ENCODE measurements at regions of chr19 and their contacts with region 1.

Region 1: GRCh38 chr19:18906605-18907519 is 10.9 kb upstream of the CERS1 start:
- DNase-seq: no peak
- ATAC-seq: no peak
- H3K4me3 ChIP-seq: no peak overlapping the region
- H3K4me3 Mint-ChIP-seq: no peak overlapping the region
- H3K27ac ChIP-seq: no peak overlapping the region
- H3K27ac Mint-ChIP-seq: no peak overlapping the region
- H3K4me1 ChIP-seq: peaks cover 0 to 5% of the 10 kb centered on the region in 2 experiments
- H3K4me1 Mint-ChIP-seq: no peaks in the 10 kb centered on the region
- H3K27me3 ChIP-seq: peaks cover 0 to 6% of the 10 kb centered on the region in 2 experiments
- H3K27me3 Mint-ChIP-seq: no peaks in the 10 kb centered on the region

Region 2: DNA sequence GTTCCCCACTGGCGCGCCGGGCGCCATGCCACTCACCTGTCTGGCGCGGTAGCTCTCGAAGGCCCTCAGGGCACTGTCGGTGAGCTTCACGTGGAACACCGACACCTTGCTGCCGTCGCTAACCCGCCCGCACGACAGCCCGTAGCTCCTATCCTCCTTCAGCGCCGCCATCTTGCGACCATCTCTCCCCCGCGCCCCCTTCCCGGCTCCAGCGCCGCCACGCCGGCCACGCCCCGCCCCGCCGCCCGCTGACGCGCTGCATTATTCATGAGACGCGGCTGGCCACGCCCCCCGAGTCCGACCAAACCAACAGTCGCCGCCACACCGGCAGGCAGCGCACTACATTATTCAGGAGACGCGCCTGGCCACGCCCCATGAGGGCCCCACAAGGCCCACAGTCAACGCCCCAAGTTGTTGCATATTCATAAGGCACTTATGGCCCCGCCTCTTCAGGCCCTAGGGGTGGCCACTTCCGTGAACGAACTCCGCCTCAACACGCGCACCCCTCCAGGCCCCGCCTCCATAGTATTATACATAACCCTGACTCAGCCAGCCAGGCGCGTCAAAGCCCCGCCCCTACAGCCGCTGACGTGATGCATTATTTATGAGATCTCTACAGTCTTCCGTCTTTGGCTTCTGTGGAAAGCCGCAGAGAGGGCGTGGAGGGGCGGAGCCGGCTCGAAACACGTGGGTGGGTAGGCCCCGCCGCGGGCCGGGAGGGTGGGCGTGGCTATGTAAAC is 384.8 kb before region 1 on chr19 and contains the start of gene ELL:
- CTCF ChIA-PET with region 1: no interaction called
- POLR2A ChIA-PET with region 1: no interaction called
- DNase-seq: peak; percentile 100
- ATAC-seq: peak; percentile 86 to 89 (median 88)
- H3K4me3 ChIP-seq: peak within 1 kb of the TSS; percentile 65 to 87
- H3K4me3 Mint-ChIP-seq: peak within 1 kb of the TSS; percentile 91 to 99 (median 95)
- H3K27ac ChIP-seq: peak within 1 kb of the TSS; percentile 89
- H3K27ac Mint-ChIP-seq: peak within 1 kb of the TSS; percentile 93 to 96
- H3K4me1 ChIP-seq: peaks cover 6 to 46% of the 10 kb centered on the region in 2 experiments
- H3K4me1 Mint-ChIP-seq: peaks cover 15 to 31% (median 25%) of the 10 kb centered on the region in 3 donors
- H3K27me3 ChIP-seq: no peaks in the 10 kb centered on the region
- H3K27me3 Mint-ChIP-seq: no peaks in the 10 kb centered on the region
- total RNA-seq, gene ELL: 27.2 to 46.4 (median 33.4) TPM

Region 3: DNA sequence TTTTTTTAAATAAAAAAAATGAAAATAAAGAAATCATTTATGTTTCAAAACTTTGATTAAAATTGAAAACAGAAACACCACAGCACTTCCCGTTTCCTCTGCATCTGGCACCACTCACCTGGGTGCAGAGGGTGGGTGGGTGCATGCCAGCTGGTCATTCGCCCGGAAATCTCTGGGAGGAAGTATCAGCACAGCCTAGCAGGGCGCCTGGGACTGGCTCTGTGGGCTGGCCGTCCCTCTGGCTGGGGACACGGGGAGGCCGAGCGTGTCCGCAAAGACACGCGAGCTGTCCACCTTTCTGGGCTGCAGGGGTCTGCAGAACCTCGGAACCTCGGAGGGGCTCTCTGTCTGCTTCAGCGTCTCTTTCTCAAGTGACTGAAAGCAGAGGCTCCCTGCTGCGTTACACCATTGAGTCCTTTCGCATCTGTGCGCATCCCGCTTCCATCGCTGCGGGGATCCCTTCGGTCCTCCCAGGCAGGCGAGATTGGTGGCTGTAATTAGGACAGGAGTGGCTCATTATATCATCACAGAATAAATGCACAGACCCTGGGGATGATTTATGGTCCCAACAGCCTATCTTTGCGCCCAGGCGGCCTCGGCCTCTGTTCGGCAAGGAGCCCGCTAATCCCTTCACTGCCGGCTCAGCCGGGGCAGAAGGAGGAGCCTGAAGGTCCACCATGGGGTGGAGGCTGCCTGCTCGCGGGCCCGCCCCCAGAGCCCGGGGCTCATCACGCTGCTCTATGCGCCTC is 206.2 kb before region 1 on chr19:
- CTCF ChIA-PET with region 1: interaction called in 1 of 2 experiments, 11 read pairs
- POLR2A ChIA-PET with region 1: no interaction called
- DNase-seq: peak; percentile 37 to 78 (median 68)
- ATAC-seq: peak; percentile 94 to 97 (median 95)
- H3K4me3 ChIP-seq: peak overlapping the region; percentile 64 to 77
- H3K4me3 Mint-ChIP-seq: peak overlapping the region; percentile 82 to 90 (median 85)
- H3K27ac ChIP-seq: peak overlapping the region; percentile 80
- H3K27ac Mint-ChIP-seq: peak overlapping the region; percentile 88 to 99
- H3K4me1 ChIP-seq: peaks cover 15 to 56% of the 10 kb centered on the region in 2 experiments
- H3K4me1 Mint-ChIP-seq: peaks cover 35 to 42% (median 42%) of the 10 kb centered on the region in 3 donors
- H3K27me3 ChIP-seq: no peaks in the 10 kb centered on the region
- H3K27me3 Mint-ChIP-seq: no peaks in the 10 kb centered on the region